Activated naive CD4-positive, alpha-beta T cell treated with anti-CD3 and anti-CD28 coated beads, Interleukin-2, amount 10 ng/mL, durations not matched to agents 7 days and 5 days (primary cell): ENCODE measurements at regions of chr2 and their contacts with region 1.

Region 1: DNA sequence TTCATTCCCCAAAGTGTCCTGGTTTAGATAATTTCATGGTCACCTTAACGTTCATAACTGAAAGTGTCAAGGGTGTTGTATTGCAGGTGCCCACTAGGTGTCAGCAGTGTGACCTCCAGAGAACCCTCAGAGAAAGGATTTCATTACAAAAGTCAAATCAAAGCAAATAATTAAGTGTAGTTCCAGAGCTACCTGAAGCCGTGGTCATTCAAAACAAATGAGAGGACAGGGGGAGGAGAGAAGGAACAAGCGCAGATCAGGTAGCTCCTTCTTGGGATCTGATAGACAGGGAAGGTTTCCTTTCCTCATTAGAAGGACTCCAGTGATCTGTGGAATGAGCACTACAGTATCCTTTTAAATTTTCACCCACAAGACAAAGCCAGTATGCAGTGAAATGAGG is at the start of gene SLC9A4:
- DNase-seq: peak; percentile 70
- H3K4me3 Mint-ChIP-seq: no peak within 1 kb of the TSS
- H3K27ac Mint-ChIP-seq: no peak within 1 kb of the TSS
- H3K4me1 Mint-ChIP-seq: no peaks in the 10 kb centered on the region
- H3K27me3 Mint-ChIP-seq: peaks cover 34% of the 10 kb centered on the region

Region 2: GRCh38 chr2:102418421-102418961 is 54.5 kb before region 1 on chr2:
- CTCF ChIA-PET with region 1: no interaction called
- DNase-seq: no peak
- H3K4me3 Mint-ChIP-seq: peak overlapping the region; percentile 66
- H3K27ac Mint-ChIP-seq: peak overlapping the region; percentile 91
- H3K4me1 Mint-ChIP-seq: peaks cover 77% of the 10 kb centered on the region
- H3K27me3 Mint-ChIP-seq: no peaks in the 10 kb centered on the region

Region 3: GRCh38 chr2:102461188-102461587 is 11.8 kb before region 1 on chr2:
- CTCF ChIA-PET with region 1: interaction called, 12 read pairs
- DNase-seq: no peak
- H3K4me3 Mint-ChIP-seq: no peak overlapping the region
- H3K27ac Mint-ChIP-seq: no peak overlapping the region
- H3K4me1 Mint-ChIP-seq: no peaks in the 10 kb centered on the region
- H3K27me3 Mint-ChIP-seq: peaks cover 35% of the 10 kb centered on the region

Region 4: GRCh38 chr2:102487761-102488466 is 14.9 kb after region 1 on chr2:
- CTCF ChIA-PET with region 1: interaction called, 18 read pairs
- DNase-seq: no peak
- H3K4me3 Mint-ChIP-seq: no peak overlapping the region
- H3K27ac Mint-ChIP-seq: no peak overlapping the region
- H3K4me1 Mint-ChIP-seq: peaks cover 5% of the 10 kb centered on the region
- H3K27me3 Mint-ChIP-seq: peaks cover 43% of the 10 kb centered on the region

Region 5: DNA sequence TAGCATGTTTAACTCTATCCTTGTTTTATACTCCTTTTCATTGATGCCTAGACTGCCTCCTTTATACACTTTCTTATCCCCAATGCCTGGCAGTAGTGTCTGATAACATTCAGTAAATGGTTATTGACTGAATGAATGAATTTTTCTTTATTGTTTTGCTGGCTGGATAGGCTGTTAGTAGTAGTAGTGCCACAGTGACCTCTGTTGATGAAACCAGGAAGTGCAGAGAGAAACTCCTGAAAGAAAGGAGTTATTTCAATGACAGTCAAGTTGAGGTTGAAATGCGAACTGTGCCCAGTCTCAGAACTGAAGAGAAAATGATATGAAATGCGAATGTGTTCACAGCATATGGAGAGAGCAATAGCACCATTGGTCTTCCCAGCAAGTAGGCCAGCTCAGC is 119.6 kb after region 1 on chr2:
- CTCF ChIA-PET with region 1: interaction called, 18 read pairs
- DNase-seq: peak; percentile 40
- H3K4me3 Mint-ChIP-seq: no peak overlapping the region
- H3K27ac Mint-ChIP-seq: no peak overlapping the region
- H3K4me1 Mint-ChIP-seq: no peaks in the 10 kb centered on the region
- H3K27me3 Mint-ChIP-seq: peaks cover 5% of the 10 kb centered on the region

Region 6: GRCh38 chr2:102615622-102616436 is 142.8 kb after region 1 on chr2:
- CTCF ChIA-PET with region 1: interaction called, 22 read pairs
- DNase-seq: peak; percentile 63
- H3K4me3 Mint-ChIP-seq: no peak overlapping the region
- H3K27ac Mint-ChIP-seq: no peak overlapping the region
- H3K4me1 Mint-ChIP-seq: peaks cover 11% of the 10 kb centered on the region
- H3K27me3 Mint-ChIP-seq: peaks cover 45% of the 10 kb centered on the region